Right lobe of liver (tissue), 6 donors: ENCODE measurements at regions of chr7 and their contacts with region 1.

Region 1: DNA sequence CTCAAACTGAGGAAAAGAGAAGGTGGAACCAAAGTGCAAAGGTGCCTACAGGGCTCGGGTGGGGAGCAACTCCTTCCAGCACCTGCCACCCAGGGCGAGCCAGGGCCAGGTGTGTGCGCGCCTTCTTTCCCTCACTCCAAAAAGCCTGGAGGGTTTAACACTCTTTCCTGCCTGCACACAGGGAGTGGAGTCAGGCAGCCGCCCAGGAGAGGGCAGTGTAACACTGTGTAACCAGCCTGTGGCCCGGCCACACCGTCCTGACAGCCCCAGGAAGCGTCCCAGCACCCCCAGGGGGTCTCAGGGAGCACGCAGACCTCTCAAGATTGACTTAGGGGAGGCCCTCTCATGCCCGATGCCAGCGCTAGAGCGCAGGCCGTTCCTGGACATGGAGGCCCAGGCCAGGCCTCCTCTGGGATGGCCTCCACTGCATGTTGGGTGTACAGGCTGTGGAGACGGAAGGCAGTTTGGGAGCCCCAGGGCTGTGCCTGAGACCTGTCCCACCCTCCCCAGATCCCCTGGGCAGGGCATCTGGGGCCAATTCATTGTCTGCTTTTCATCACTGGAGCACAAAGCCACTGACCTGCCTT is 13.4 kb downstream of the BRI3 start:
- DNase-seq: peak in 2 of 3 donors; percentile 66 to 71
- ATAC-seq: peak; percentile 81 to 89 (median 84)
- H3K4me3 ChIP-seq: no peak overlapping the region
- H3K27ac ChIP-seq: peak overlapping the region in 1 of 3 donors; percentile 1
- H3K4me1 ChIP-seq: peaks cover 0 to under 1% (median 0%) of the 10 kb centered on the region in 4 donors
- H3K27me3 ChIP-seq: no peaks in the 10 kb centered on the region
- CTCF ChIP-seq: peak; percentile 66 to 81 (median 76)
- POLR2A ChIP-seq: no peak

Region 2: GRCh38 chr7:98400542-98401340 is 105.9 kb after region 1 on chr7 and contains the start of gene BAIAP2L1:
- intact Hi-C with region 1: loop called (anchors 5 to 10 kb)
- DNase-seq: peak; percentile 95 to 97 (median 96)
- ATAC-seq: peak; percentile 97 to 99 (median 98)
- H3K4me3 ChIP-seq: peak within 1 kb of the TSS; percentile 76 to 84 (median 84)
- H3K27ac ChIP-seq: peak within 1 kb of the TSS; percentile 65 to 75 (median 69)
- H3K4me1 ChIP-seq: peaks cover 0 to 15% (median 0%) of the 10 kb centered on the region in 4 donors
- H3K27me3 ChIP-seq: no peaks in the 10 kb centered on the region
- CTCF ChIP-seq: peak in 1 of 4 donors; percentile 91
- POLR2A ChIP-seq: peak; percentile 70
- total RNA-seq, gene BAIAP2L1: 9.1 to 29.5 (median 25.2) TPM

Region 3: DNA sequence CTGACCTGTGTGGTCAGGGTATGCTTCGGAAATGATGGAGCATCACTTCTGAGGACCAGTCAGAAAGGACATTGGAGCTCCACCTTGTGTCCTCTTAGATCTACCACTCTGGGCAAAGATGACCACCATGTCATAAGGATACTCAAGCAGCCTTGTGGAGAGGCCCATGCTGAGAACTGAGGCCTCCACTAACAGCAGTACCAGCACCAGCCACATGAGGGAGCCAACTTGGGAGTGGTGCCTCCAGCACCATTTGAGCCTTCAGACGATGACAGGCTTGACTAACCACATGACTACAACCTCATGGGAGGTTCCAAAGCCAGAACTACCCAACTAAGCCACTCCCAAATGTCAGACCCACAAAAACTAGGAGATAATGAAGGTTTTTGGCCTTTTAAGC is 438.1 kb after region 1 on chr7:
- intact Hi-C with region 1: no loop called
- DNase-seq: no peak
- ATAC-seq: peak; percentile 39 to 64 (median 44)
- H3K4me3 ChIP-seq: no peak overlapping the region
- H3K27ac ChIP-seq: no peak overlapping the region
- H3K4me1 ChIP-seq: no peaks in the 10 kb centered on the region
- H3K27me3 ChIP-seq: no peaks in the 10 kb centered on the region
- CTCF ChIP-seq: peak; percentile 18 to 40 (median 22)
- POLR2A ChIP-seq: no peak